ENCODE measurements at regions of chr9 and their contacts with region 1.

Region 1: GRCh38 chr9:121686930-121687541 is 35.6 kb downstream of the DAB2IP start:
- DNase-seq: peak; percentile 78 to 82
- H3K4me3 ChIP-seq: no peak overlapping the region
- H3K27ac ChIP-seq: peak overlapping the region in 1 of 3 donors; percentile 12
- H3K4me1 ChIP-seq: no peaks in the 10 kb centered on the region
- H3K27me3 ChIP-seq: no peaks in the 10 kb centered on the region
- CTCF ChIP-seq: peak; percentile 59 to 92 (median 80)
- POLR2A ChIP-seq: no peak

Region 2: GRCh38 chr9:121545875-121546423 is 141.1 kb before region 1 on chr9:
- intact Hi-C with region 1: loop called (anchors 5 kb)
- DNase-seq: peak; percentile 98 to 99
- H3K4me3 ChIP-seq: peak overlapping the region in 1 of 3 donors; percentile 17
- H3K27ac ChIP-seq: no peak overlapping the region
- H3K4me1 ChIP-seq: peaks cover 0 to 18% of the 10 kb centered on the region in 2 donors
- H3K27me3 ChIP-seq: no peaks in the 10 kb centered on the region
- CTCF ChIP-seq: peak; percentile 81 to 99 (median 92)
- POLR2A ChIP-seq: peak in 1 of 2 donors; percentile 27

Region 3: GRCh38 chr9:121596515-121596914 is 90.5 kb before region 1 on chr9:
- intact Hi-C with region 1: no loop called
- DNase-seq: no peak
- H3K4me3 ChIP-seq: no peak overlapping the region
- H3K27ac ChIP-seq: no peak overlapping the region
- H3K4me1 ChIP-seq: peaks cover 7 to 18% of the 10 kb centered on the region in 2 donors
- H3K27me3 ChIP-seq: no peaks in the 10 kb centered on the region
- CTCF ChIP-seq: no peak
- POLR2A ChIP-seq: no peak

Region 4: DNA sequence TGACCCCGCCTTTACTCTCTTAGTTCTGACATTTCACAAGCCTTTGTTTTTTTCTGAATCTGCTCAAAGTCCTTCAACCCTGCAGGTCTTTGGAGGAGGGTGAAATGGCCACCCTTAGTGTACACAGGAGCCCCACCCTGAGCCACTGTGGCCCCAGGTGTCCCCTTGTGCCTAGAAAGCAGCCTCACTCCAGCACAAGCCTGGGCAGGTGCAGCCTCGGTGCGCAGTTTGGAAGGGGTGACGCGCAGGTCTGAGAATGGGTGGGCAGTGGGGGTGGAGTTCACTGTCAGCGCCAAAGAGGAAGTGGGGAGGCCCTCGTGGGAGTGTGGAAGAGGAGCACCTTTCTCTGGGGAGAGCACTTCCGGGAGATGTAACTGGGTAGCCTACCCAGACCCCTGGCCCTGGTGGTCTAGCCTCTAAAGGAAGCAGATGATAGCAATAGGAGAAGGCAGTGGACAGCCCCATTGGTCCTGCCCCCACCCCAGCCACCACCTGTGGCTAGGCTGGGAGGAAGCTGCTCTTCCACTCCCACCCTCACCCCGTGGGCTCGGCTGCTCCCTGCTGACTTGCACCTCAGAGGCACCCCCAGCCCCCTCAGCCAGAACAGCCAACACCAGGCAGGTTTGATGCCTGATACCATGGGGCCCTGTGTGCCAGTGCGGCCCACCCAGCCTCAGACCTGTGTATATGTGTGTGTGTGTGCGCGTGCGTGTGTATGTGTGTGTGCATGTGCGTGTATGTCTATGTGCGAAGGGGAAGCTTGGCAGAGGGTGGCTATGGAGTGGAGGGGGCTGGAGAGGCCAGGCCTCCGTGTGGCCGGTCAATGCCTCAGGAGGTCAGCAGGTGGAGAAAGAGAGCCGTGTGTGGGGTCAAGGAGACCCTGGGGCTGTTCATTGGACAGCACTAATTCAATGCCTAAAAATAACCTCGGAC is 52.4 kb before region 1 on chr9:
- intact Hi-C with region 1: loop called (anchors 10 kb)
- DNase-seq: peak; percentile 40 to 44
- H3K4me3 ChIP-seq: no peak overlapping the region
- H3K27ac ChIP-seq: no peak overlapping the region
- H3K4me1 ChIP-seq: peaks cover 16 to 48% of the 10 kb centered on the region in 2 donors
- H3K27me3 ChIP-seq: no peaks in the 10 kb centered on the region
- CTCF ChIP-seq: peak in 5 of 6 experiments; percentile 15 to 59 (median 56)
- POLR2A ChIP-seq: no peak

Region 5: GRCh38 chr9:121852651-121853616 is 165.9 kb after region 1 on chr9:
- intact Hi-C with region 1: loop called (anchors 10 kb)
- DNase-seq: no peak
- H3K4me3 ChIP-seq: no peak overlapping the region
- H3K27ac ChIP-seq: no peak overlapping the region
- H3K4me1 ChIP-seq: no peaks in the 10 kb centered on the region
- H3K27me3 ChIP-seq: no peaks in the 10 kb centered on the region
- CTCF ChIP-seq: no peak
- POLR2A ChIP-seq: no peak

Region 6: DNA sequence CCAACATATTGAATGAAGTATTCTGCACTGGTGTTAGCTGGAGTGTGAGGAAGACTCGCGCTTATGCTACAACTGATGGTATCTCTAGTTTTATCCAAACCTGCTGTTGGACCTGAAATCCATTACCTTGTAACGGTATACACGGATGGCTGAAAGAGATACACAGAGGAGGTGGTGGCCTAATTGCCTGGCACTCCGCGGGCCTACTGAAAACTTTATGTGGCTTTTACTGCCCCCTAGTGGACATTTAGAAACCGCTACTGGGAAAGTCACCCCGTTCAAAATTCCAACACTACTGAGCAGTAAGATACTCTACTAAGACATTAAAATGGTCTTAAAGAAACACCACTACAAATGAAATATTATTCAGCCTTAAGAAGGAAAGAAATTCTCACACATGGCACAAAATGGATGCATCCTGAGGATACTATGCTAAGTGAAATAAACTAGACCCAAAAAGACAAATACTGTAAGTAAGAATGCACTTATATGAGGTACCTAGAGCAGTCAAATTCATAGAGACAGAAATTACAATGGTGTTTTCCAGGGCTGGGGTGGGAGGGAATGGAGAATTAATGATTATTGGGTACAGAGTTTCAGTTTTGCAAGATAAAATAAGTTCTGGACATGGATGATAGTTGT is 305.7 kb after region 1 on chr9:
- intact Hi-C with region 1: loop called (anchors 2 kb)
- DNase-seq: peak; percentile 65 to 73
- H3K4me3 ChIP-seq: no peak overlapping the region
- H3K27ac ChIP-seq: no peak overlapping the region
- H3K4me1 ChIP-seq: peaks cover 7 to 12% of the 10 kb centered on the region in 2 donors
- H3K27me3 ChIP-seq: no peaks in the 10 kb centered on the region
- CTCF ChIP-seq: peak; percentile 56 to 83 (median 71)
- POLR2A ChIP-seq: no peak